ENCODE measurements at regions of chr11 and their contacts with region 1.

Region 1: DNA sequence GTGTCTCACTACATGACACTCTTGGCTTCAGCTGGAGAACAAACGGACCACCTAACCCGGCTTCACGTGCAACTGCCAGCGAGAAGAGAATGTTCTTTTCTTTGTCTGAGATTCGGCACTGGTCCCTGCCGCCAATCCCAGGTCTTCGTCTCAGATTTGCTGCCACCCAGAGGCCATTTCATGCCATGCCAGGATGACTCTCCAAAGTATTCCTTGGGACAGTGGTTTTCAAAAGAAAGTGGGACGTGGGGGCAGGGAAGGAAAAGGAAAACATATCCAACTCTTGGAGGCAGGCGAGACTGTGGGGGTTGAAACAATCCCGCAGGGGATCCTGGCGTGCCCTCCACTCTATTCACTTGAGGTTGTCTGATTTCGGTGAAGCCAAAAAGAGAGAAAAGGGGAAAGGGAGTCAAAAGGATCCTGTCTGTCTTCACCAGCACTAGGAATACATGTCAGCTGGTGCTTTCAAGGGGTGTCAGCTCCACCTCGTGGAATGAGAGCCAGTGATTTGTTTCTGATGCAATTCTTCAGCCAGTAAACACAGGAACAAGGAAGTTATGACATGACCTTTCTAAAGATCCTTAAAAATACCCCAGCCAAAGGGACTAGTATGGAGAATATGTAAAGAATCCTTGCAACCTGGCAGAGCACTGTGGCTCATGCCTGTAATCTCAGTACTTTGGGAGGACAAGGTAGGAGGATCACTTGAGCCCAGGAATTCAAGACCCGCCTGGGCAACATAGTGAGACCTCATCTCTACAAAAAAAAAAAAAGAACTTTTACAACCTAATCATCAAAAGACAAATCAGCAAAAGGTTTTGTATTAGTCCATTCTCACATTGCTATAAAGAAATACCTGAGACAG is 41.0 kb upstream of the APLNR start:
- ATAC-seq: peak; percentile 84 to 98 (median 90)
- H3K4me3 ChIP-seq: no peak overlapping the region
- H3K27ac ChIP-seq: no peak overlapping the region
- H3K4me1 ChIP-seq: peaks cover 9% of the 10 kb centered on the region in 2 donors

Region 2: GRCh38 chr11:57124917-57125316 is 153.2 kb before region 1 on chr11:
- in situ Hi-C with region 1: loop called in 1 of 9 experiments (anchors 10 kb)
- ATAC-seq: no peak
- H3K4me3 ChIP-seq: no peak overlapping the region
- H3K27ac ChIP-seq: no peak overlapping the region
- H3K4me1 ChIP-seq: peaks cover 3 to 4% of the 10 kb centered on the region in 2 donors

Measured in motor neuron (in vitro differentiated cells).